B cell (primary cell): ENCODE measurements at regions of chr10 and their contacts with region 1.

Region 1: DNA sequence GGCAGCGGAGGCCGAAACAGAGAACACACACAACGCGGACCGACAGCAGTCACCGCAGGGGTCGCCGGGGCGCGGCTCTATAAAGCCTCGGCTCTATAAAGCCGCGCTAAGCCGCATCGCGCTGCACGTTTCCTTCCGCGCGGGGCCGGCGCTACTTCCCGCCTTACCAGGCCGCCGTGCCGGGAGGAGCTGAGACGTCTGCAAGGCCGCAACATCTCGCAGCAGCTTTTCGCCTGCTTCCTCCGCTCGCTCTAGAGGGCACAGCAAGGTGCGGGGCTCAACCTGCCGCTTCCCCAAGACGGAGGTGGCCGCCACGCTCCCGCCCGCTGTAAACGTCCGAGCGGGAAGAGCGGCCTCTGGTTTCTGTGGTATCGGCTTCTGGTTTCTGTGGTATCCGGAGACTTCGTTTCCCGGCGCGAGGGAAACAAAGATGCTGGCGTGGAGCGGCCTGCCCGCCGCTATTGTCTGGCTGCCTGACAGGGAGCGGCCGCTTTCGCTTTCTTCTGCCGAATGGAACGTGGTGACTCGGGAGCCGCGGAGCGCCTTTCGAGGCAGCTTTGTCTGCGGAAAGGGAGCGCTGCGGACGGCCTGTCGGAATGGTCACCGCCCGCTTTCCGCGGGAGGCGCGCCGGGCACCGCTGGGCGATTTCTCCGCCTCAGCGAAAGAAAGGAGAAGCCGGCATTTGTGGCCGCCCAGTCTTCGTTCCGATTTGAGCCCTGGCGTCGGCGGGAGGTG is 91.8 kb downstream of the SPAG6 start:
- DNase-seq: peak; percentile 96
- ATAC-seq: peak; percentile 86
- H3K4me3 ChIP-seq: peak overlapping the region; percentile 65 to 93 (median 86)
- H3K4me3 Mint-ChIP-seq: peak overlapping the region; percentile 98
- H3K27ac ChIP-seq: peak overlapping the region; percentile 96 to 97
- H3K27ac Mint-ChIP-seq: peak overlapping the region; percentile 99
- H3K4me1 ChIP-seq: peaks cover 19 to 24% of the 10 kb centered on the region in 2 donors
- H3K4me1 Mint-ChIP-seq: peaks cover 36% of the 10 kb centered on the region
- H3K27me3 ChIP-seq: no peaks in the 10 kb centered on the region
- H3K27me3 Mint-ChIP-seq: no peaks in the 10 kb centered on the region
- CTCF ChIP-seq: peak; percentile 25

Region 2: GRCh38 chr10:21533467-21534279 is 903.4 kb before region 1 on chr10 and contains the start of gene MLLT10:
- CTCF ChIA-PET with region 1: no interaction called
- POLR2A ChIA-PET with region 1: no interaction called
- intact Hi-C with region 1: loop called (anchors 2 kb)
- DNase-seq: peak; percentile 96
- ATAC-seq: peak; percentile 87
- H3K4me3 ChIP-seq: peak within 1 kb of the TSS; percentile 58 to 98 (median 84)
- H3K4me3 Mint-ChIP-seq: peak within 1 kb of the TSS; percentile 94
- H3K27ac ChIP-seq: peak within 1 kb of the TSS; percentile 69 to 82
- H3K27ac Mint-ChIP-seq: peak within 1 kb of the TSS; percentile 95
- H3K4me1 ChIP-seq: peaks cover 12 to 16% of the 10 kb centered on the region in 2 donors
- H3K4me1 Mint-ChIP-seq: peaks cover 17% of the 10 kb centered on the region
- H3K27me3 ChIP-seq: peaks cover 0 to 10% (median under 1%) of the 10 kb centered on the region in 4 experiments
- H3K27me3 Mint-ChIP-seq: peaks cover 7% of the 10 kb centered on the region
- CTCF ChIP-seq: no peak
- total RNA-seq, gene MLLT10: 66.5 and 70.5 TPM in 2 replicates

Region 3: DNA sequence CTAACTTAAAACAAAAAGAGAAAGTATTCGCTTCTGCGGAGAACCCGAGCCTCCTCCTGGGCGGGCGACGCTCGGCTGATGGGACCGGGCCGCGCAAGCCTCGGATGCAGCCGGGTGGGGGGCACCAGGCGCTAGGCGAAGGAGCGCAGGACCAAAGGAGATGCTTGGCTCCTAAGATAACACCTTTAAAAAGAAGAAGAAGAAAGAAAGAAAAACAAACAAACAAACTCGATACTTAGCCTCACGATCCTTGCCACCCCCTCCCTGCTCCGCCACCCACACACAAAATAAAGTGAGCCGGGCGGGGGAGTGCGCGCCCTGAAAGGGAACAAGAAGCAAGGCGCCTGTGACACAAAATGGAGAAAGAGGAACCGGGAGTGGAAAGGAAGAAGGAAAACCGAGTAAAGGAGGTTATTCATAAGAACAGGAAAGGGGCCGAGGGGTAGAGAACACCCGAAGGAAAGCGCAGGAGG is 185.3 kb before region 1 on chr10:
- CTCF ChIA-PET with region 1: interaction called, 4 read pairs
- POLR2A ChIA-PET with region 1: interaction called, 27 read pairs
- intact Hi-C with region 1: loop called (anchors 1 kb)
- DNase-seq: peak; percentile 90
- ATAC-seq: peak; percentile 56
- H3K4me3 ChIP-seq: peak overlapping the region; percentile 77 to 95 (median 86)
- H3K4me3 Mint-ChIP-seq: peak overlapping the region; percentile 97
- H3K27ac ChIP-seq: peak overlapping the region; percentile 95 to 97
- H3K27ac Mint-ChIP-seq: peak overlapping the region; percentile 100
- H3K4me1 ChIP-seq: peaks cover 9 to 15% of the 10 kb centered on the region in 2 donors
- H3K4me1 Mint-ChIP-seq: peaks cover 26% of the 10 kb centered on the region
- H3K27me3 ChIP-seq: no peaks in the 10 kb centered on the region
- H3K27me3 Mint-ChIP-seq: no peaks in the 10 kb centered on the region
- CTCF ChIP-seq: no peak

Region 4: DNA sequence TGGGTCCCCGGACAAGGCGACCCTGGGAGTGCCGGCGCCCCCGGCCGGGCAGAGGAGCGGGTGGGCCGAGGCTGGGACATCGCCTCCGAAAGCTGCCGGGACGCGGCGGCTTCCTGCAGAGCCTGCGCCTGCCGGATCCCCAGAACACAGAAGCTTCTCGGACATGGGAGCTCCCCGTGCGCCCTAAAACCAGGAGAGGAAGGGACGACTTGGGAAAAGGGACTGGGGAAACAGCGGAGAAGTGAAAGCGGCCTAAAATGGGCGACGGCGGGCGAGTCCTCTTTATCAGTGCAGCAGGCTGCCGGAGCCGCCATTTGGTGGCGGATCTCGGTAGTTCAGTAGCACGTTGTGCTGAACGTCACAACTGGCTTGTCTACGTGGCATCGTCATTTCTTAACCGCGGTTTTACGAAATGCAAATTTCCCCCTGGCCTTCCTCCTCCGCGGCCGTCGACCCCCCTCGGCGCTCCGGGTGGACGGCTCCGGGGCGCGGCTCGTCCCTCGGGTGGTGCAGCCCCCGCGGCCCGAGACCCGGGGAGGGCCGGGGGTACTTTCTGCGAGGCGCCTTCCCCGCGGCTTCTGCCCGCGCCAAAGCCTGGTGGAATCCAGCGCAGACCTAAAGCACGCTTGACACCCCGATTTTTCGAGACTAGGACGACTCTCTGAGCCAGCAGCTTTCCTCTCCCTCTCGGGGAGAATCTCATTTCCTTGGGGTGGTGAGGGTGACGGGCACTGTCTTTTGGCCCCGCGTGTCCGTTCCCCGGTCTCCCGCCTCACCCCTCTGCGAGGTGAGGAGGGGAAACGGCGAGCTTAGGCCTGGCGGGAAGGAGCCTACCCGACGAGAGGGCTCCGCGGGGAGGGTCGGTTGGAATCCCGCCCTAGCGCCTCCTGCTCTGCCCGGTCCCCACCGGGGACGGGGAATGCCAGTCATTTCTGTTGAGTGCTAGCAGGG is 101.6 kb before region 1 on chr10:
- CTCF ChIA-PET with region 1: interaction called, 3 read pairs
- POLR2A ChIA-PET with region 1: interaction called, 32 read pairs
- intact Hi-C with region 1: loop called (anchors 2 kb)
- DNase-seq: peak; percentile 93
- ATAC-seq: peak; percentile 74
- H3K4me3 ChIP-seq: peak overlapping the region; percentile 41 to 69 (median 65)
- H3K4me3 Mint-ChIP-seq: peak overlapping the region; percentile 94
- H3K27ac ChIP-seq: peak overlapping the region in 1 of 2 donors; percentile 58
- H3K27ac Mint-ChIP-seq: peak overlapping the region; percentile 96
- H3K4me1 ChIP-seq: peaks cover 48 to 63% of the 10 kb centered on the region in 2 donors
- H3K4me1 Mint-ChIP-seq: peaks cover 39% of the 10 kb centered on the region
- H3K27me3 ChIP-seq: peaks cover 8 to 48% (median 41%) of the 10 kb centered on the region in 4 experiments
- H3K27me3 Mint-ChIP-seq: peaks cover 27% of the 10 kb centered on the region
- CTCF ChIP-seq: peak; percentile 30

Region 5: DNA sequence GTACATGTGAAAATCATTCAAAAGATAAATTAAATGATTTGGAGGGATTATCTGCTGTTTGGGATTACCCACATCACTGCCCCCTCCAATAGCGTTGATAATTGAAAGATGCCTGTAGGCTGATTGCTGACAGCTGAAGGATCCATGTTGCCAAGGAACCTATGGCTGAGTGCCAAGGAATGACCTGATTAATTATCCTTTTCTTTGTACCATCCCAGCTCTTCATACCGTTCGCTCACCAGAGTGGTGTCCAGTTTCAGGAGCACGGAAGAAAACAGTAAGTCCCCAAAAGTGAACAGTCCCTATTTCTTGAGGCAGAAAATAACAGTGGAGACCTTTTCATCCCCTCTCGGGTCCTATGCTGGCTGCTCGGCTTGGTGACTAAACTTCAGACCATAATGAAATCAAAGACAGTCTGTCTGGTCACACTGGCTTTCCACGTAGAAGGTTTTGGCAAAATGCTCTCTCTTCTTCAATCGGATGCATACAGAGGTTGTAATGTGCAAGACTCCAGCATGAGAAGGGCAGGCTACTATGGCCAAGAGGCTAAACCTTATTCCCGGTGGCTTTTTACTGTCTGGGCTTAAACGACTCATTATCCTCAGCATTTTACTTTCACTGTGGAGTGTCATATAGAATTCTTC is 17.0 kb after region 1 on chr10:
- CTCF ChIA-PET with region 1: interaction called, 7 read pairs
- POLR2A ChIA-PET with region 1: interaction called, 15 read pairs
- intact Hi-C with region 1: loop called (anchors 2 kb)
- DNase-seq: no peak
- ATAC-seq: no peak
- H3K4me3 ChIP-seq: peak overlapping the region in 1 of 5 experiments; percentile 41
- H3K4me3 Mint-ChIP-seq: no peak overlapping the region
- H3K27ac ChIP-seq: peak overlapping the region in 1 of 2 donors; percentile 25
- H3K27ac Mint-ChIP-seq: peak overlapping the region; percentile 42
- H3K4me1 ChIP-seq: peaks cover 20 to 27% of the 10 kb centered on the region in 2 donors
- H3K4me1 Mint-ChIP-seq: peaks cover 28% of the 10 kb centered on the region
- H3K27me3 ChIP-seq: no peaks in the 10 kb centered on the region
- H3K27me3 Mint-ChIP-seq: no peaks in the 10 kb centered on the region
- CTCF ChIP-seq: no peak

Region 6: DNA sequence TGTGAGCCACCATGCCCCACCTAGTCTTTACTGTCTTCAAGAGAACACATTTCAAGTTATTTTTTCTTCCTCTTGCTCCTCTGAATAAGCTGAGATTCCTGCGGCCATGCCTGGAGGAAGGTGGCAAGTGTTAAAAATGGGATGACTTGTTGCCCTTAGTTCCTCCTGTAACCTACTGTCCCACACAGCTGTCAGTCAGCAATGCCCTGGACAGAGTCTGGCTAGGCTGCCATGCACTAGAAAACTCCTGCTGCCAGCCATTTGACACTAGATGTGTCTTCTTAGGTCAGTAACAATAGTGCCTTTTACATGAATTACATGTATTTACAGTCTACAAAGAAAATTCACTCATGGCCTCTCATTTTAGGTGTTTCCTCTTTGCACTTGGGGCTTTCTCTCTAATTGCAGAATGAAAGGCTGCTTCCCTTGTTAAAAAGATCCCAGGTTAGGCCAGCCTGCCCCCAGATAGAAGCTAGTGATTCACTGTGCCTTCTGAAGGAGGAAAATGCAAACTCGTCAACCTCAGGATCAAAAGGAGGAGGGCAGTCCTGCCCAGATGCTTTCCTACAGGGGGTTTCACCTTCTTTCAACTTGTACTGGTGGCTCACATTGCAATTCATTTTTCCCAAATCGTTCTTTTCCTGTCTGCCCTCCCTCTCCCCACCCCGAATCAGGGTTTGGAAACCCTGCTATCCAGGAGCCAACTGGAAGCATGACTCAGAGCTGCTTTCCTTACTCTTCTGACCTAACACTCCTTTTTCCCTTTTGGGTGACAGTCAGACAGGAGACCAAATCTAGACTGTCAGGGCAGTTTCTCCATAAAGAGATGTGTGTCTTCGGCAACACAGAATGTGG is 44.9 kb after region 1 on chr10:
- CTCF ChIA-PET with region 1: no interaction called
- POLR2A ChIA-PET with region 1: no interaction called
- intact Hi-C with region 1: no loop called
- DNase-seq: no peak
- ATAC-seq: no peak
- H3K4me3 ChIP-seq: no peak overlapping the region
- H3K4me3 Mint-ChIP-seq: peak overlapping the region; percentile 24
- H3K27ac ChIP-seq: no peak overlapping the region
- H3K27ac Mint-ChIP-seq: no peak overlapping the region
- H3K4me1 ChIP-seq: peaks cover 3 to 6% of the 10 kb centered on the region in 2 donors
- H3K4me1 Mint-ChIP-seq: peaks cover 13% of the 10 kb centered on the region
- H3K27me3 ChIP-seq: peaks cover 0 to 10% (median 4%) of the 10 kb centered on the region in 4 experiments
- H3K27me3 Mint-ChIP-seq: peaks cover 5% of the 10 kb centered on the region
- CTCF ChIP-seq: no peak

Region 7: GRCh38 chr10:22606164-22606614 is 169.1 kb after region 1 on chr10:
- CTCF ChIA-PET with region 1: no interaction called
- POLR2A ChIA-PET with region 1: interaction called, 4 read pairs
- intact Hi-C with region 1: loop called (anchors 5 kb)
- DNase-seq: peak; percentile 82
- ATAC-seq: peak; percentile 78
- H3K4me3 ChIP-seq: peak overlapping the region in 3 of 5 experiments; percentile 0 to 51 (median 18)
- H3K4me3 Mint-ChIP-seq: peak overlapping the region; percentile 70
- H3K27ac ChIP-seq: peak overlapping the region; percentile 78 to 91
- H3K27ac Mint-ChIP-seq: peak overlapping the region; percentile 88
- H3K4me1 ChIP-seq: peaks cover 84 to 88% of the 10 kb centered on the region in 2 donors
- H3K4me1 Mint-ChIP-seq: peaks cover 87% of the 10 kb centered on the region
- H3K27me3 ChIP-seq: no peaks in the 10 kb centered on the region
- H3K27me3 Mint-ChIP-seq: no peaks in the 10 kb centered on the region
- CTCF ChIP-seq: no peak